ENCODE measurements at regions of chr14 and their contacts with region 1.

Region 1: GRCh38 chr14:23057757-23058653 is 685 bp upstream of the CDH24 start:
- DNase-seq: peak; percentile 77 to 98 (median 89)

Region 2: DNA sequence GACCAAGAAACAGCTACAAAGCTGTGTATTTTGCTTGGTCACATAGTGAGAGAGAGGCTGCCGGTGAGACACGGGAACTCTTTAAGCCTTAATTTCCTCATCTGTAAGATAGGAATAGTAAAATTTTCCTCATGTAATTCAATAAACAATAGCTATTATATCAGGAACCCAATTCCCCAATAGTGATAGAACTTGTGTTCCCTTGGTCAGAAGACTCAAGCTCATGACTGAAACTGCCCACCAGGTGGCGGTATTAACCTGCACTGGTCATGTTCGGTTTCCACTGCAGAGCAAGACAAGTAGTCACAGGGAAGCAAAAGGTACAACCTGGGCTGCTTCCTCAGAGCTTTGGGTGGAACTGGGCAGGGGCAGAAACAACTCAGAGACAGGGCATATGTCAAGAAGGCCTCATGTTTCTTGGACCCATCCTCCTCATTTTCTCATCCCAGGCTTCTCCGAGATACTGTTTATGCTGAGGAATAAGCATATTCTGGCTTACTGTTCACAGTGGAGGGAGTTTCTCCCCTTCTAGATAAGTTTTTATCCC is 71.4 kb before region 1 on chr14:
- intact Hi-C with region 1: loop called (anchors 1 kb)
- DNase-seq: peak; percentile 78 to 99 (median 94)

Region 3: GRCh38 chr14:22994762-22995275 is 63.2 kb before region 1 on chr14:
- intact Hi-C with region 1: loop called (anchors 2 kb)
- DNase-seq: no peak

Region 4: GRCh38 chr14:23154964-23155587 is 97.1 kb after region 1 on chr14:
- intact Hi-C with region 1: no loop called
- DNase-seq: peak in 9 of 10 donors; percentile 27 to 94 (median 59)

Measured in posterior cingulate gyrus (tissue), 11 donors.